Activated CD8-positive, alpha-beta T cell treated with anti-CD3 and anti-CD28 coated beads, Interleukin-2, amount 10 ng/mL, durations not matched to agents 7 days and 5 days (primary cell): ENCODE measurements at regions of chr17 and their contacts with region 1.

Region 1: GRCh38 chr17:50139950-50140871 is 10.3 kb upstream of the SAMD14 start:
- DNase-seq: peak; percentile 88
- ATAC-seq: peak; percentile 90
- H3K4me3 Mint-ChIP-seq: peak overlapping the region; percentile 62
- H3K27ac Mint-ChIP-seq: peak overlapping the region; percentile 90
- H3K4me1 Mint-ChIP-seq: peaks cover 62% of the 10 kb centered on the region
- H3K27me3 Mint-ChIP-seq: no peaks in the 10 kb centered on the region

Region 2: DNA sequence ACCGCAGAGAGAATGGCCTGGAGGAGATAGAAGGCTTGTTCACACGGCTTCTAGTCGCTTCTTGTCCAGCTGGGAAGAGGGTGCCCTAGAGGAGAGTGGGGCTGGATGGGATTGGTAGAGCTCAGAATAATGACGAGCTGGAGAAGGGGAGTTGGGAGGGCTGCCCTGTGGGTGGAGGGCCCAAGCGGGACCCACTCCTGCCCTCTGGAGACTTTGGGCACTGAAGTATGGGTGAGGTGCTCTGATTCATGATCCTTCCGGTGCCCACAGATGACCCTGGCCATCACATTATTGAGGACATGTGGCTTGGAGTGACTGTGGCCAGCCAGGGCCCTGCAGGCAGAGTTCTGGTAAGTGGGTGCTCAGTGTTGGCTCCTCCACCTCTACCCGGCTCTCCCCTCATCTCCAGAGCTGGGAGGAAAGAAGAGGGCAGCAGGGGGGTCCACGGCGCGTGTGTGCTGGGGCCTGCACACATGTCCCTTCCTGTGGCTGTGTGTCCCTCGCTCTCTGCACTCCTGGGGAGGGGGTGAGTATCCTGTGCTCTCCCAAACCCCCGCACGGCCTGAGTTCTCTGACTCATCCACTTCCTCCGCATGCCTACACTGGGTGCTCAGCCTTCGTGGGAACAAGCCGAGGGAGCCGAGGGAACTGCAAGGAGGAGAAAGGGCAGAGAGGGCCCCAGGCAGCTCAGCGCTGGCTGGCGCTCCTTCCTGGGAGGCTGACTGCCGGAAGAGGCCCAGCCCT is 75.8 kb before region 1 on chr17:
- CTCF ChIA-PET with region 1: no interaction called
- POLR2A ChIA-PET with region 1: no interaction called
- DNase-seq: no peak
- ATAC-seq: peak; percentile 15
- H3K4me3 Mint-ChIP-seq: no peak overlapping the region
- H3K27ac Mint-ChIP-seq: no peak overlapping the region
- H3K4me1 Mint-ChIP-seq: no peaks in the 10 kb centered on the region
- H3K27me3 Mint-ChIP-seq: no peaks in the 10 kb centered on the region

Region 3: DNA sequence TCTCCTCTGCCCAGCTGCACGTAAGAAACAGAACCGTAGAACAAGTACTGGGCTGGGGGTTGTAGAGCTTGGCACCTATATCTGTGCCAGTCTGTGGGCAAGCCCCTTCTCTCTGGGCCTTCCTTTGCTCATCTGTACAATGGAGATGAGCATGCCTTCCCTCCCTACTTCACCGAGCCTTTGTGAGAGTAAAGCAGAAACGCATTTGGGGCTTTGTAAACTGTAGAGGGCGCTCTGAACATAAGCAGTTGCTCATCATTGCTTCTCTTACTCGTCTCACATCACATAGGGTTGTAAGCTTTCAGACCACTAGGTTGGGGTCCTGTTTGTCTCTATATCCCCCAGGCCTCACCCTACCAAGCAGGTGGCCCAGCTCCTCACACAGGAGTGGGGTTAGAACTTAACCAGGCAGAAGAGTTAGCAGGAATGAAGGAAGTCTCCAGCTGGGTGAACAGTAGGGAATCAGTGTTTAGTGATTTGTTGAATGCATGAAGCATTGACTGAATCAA is 25.3 kb before region 1 on chr17:
- CTCF ChIA-PET with region 1: interaction called, 18 read pairs
- POLR2A ChIA-PET with region 1: interaction called, 3 read pairs
- DNase-seq: peak; percentile 73
- ATAC-seq: peak; percentile 46
- H3K4me3 Mint-ChIP-seq: no peak overlapping the region
- H3K27ac Mint-ChIP-seq: no peak overlapping the region
- H3K4me1 Mint-ChIP-seq: peaks cover 11% of the 10 kb centered on the region
- H3K27me3 Mint-ChIP-seq: peaks cover 40% of the 10 kb centered on the region

Region 4: GRCh38 chr17:50151041-50151936 is 11.1 kb after region 1 on chr17:
- CTCF ChIA-PET with region 1: interaction called, 67 read pairs
- POLR2A ChIA-PET with region 1: interaction called, 8 read pairs
- DNase-seq: peak; percentile 94
- ATAC-seq: peak; percentile 77
- H3K4me3 Mint-ChIP-seq: peak overlapping the region; percentile 84
- H3K27ac Mint-ChIP-seq: peak overlapping the region; percentile 94
- H3K4me1 Mint-ChIP-seq: peaks cover 49% of the 10 kb centered on the region
- H3K27me3 Mint-ChIP-seq: no peaks in the 10 kb centered on the region